ENCODE measurements at regions of chr1 and their contacts with region 1.

Region 1: DNA sequence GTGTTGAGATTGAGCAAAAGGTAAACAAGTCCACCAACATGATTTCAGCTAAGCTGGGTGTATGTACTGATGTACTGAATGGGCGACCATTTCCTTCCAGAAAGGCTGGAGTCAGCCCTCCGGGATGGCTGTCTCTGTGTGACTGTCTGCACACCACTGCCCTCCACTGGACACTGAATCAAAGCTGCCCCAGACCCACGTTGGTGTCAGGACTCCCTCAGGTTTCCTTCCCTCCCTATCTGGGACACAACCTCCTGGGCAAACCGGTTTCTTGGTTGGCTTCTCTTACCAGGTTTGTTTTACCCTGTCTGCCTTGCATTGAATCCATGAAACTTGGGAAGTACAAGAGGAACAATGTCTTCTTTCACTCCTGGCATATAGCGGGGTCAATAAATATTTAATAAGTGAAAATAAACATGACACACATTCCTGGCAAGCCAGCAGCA is 5.3 kb upstream of the SRP9 start:
- H3K4me3 Mint-ChIP-seq: no peak overlapping the region
- H3K27ac Mint-ChIP-seq: no peak overlapping the region
- H3K4me1 Mint-ChIP-seq: peaks cover 14% of the 10 kb centered on the region
- H3K27me3 Mint-ChIP-seq: peaks cover 3% of the 10 kb centered on the region

Region 2: DNA sequence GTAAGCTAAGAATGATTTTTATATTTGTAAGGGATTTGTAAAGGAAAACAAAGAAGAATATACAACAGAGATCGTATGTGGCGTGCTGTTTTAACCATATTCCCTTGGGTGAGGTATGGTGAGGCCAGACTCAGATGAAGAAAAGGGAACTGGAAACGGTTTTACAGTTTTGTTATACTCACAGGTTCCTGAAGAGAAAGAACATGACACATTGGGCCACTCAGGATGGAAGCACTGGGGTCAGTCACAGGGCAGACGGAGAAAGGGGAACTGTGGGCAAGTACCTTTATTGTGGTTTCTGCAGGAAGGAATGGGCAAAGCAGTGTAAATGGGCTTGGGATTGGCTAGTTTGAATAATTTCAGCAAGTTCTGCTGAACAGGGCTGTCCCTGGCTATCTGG is 521.9 kb before region 1 on chr1:
- intact Hi-C with region 1: no loop called
- H3K4me3 Mint-ChIP-seq: no peak overlapping the region
- H3K27ac Mint-ChIP-seq: no peak overlapping the region
- H3K4me1 Mint-ChIP-seq: peaks cover 8% of the 10 kb centered on the region
- H3K27me3 Mint-ChIP-seq: no peaks in the 10 kb centered on the region

Region 3: DNA sequence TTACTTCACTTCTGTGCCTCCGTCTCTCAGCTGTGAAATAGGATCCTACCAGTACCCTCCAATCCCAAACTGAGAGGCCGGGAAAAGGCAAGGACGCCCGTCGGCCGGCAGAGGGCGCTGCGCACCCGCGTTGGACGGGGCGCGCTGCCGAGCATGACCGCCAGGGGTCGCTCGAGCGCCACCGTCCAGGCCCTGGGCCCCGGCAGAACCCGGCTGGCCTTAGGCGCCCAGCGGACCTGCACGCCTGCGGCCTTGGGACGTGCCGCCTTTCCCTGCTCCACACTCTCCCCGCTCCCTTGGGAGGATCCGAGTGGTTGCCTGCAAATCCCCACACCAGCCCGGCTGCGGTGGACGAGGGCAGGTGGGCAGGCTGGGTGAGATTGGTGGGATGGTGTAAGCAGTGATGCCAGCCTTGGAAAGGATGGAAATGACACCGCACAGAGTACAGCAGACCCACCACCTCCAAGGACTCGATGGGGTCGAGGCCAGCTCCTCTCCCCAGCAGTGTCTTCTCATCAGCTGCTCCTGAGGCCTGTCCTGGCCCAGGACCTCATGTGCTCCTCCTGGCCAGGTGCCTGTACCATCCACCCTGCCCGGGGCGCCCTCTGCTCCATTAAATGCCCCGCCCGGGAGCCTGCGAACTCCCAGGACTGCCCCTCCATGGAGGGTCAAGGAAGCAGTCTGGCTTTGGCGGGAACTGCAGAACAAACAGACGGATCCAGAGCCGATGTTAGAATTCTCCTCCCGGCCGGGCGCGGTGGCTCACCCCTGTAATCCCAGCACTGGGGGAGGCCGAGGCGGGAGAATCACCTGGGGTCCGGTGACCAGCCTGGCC is 297.1 kb before region 1 on chr1:
- intact Hi-C with region 1: loop called (anchors 1 kb)
- H3K4me3 Mint-ChIP-seq: no peak overlapping the region
- H3K27ac Mint-ChIP-seq: peak overlapping the region; percentile 65
- H3K4me1 Mint-ChIP-seq: peaks cover 26% of the 10 kb centered on the region
- H3K27me3 Mint-ChIP-seq: peaks cover 9% of the 10 kb centered on the region

Region 4: GRCh38 chr1:225554216-225554812 is 218.0 kb before region 1 on chr1:
- intact Hi-C with region 1: loop called (anchors 2 kb)
- H3K4me3 Mint-ChIP-seq: no peak overlapping the region
- H3K27ac Mint-ChIP-seq: no peak overlapping the region
- H3K4me1 Mint-ChIP-seq: peaks cover 2% of the 10 kb centered on the region
- H3K27me3 Mint-ChIP-seq: no peaks in the 10 kb centered on the region